ENCODE measurements at regions of chr20 and their contacts with region 1.

Region 1: GRCh38 chr20:354298-355064 is 7.6 kb downstream of the NRSN2 start:
- DNase-seq: peak; percentile 81 to 87 (median 84)
- ATAC-seq: peak; percentile 95
- H3K4me3 ChIP-seq: no peak overlapping the region
- H3K27ac ChIP-seq: peak overlapping the region; percentile 33; the same call in 1 of the 3 replicates
- H3K4me1 ChIP-seq: peaks cover 6 to 12% of the 10 kb centered on the region in 2 experiments; a peak in 4 of 5 replicates
- H3K27me3 ChIP-seq: no peaks in the 10 kb centered on the region
- CTCF ChIP-seq: peak; percentile 88 to 93 (median 92)
- EP300 ChIP-seq: 0 out of 2 replicates have a peak, but pooled peaks have one; percentile 19
- POLR2A ChIP-seq: no peak
- RAD21 ChIP-seq: peak; percentile 93 to 94

Region 2: DNA sequence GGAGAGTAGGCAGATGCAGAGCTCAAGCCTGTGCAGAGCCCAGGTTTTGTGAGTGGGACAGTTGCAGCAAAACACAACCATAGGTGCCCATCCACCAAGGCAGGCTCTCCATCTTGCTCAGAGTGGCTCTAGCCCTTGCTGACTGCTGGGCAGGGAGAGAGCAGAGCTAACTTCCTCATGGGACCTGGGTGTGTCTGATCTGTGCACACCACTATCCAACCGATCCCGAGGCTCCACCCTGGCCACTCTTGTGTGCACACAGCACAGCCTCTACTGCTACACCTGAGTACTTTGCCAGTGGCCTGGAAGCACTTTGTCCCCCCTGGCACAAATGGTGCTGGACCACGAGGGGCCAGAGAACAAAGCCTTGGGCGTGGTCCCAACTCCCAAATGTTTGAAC is 274.9 kb before region 1 on chr20:
- CTCF ChIA-PET with region 1: no interaction called
- POLR2A ChIA-PET with region 1: no interaction called
- in situ Hi-C with region 1: no loop called
- intact Hi-C with region 1: no loop called
- DNase-seq: no peak
- ATAC-seq: no peak
- H3K4me3 ChIP-seq: no peak overlapping the region
- H3K27ac ChIP-seq: no peak overlapping the region
- H3K4me1 ChIP-seq: no peaks in the 10 kb centered on the region; a peak in 1 of 5 replicates
- H3K27me3 ChIP-seq: no peaks in the 10 kb centered on the region
- CTCF ChIP-seq: no peak
- EP300 ChIP-seq: no peak
- POLR2A ChIP-seq: no peak
- RAD21 ChIP-seq: no peak

Region 3: DNA sequence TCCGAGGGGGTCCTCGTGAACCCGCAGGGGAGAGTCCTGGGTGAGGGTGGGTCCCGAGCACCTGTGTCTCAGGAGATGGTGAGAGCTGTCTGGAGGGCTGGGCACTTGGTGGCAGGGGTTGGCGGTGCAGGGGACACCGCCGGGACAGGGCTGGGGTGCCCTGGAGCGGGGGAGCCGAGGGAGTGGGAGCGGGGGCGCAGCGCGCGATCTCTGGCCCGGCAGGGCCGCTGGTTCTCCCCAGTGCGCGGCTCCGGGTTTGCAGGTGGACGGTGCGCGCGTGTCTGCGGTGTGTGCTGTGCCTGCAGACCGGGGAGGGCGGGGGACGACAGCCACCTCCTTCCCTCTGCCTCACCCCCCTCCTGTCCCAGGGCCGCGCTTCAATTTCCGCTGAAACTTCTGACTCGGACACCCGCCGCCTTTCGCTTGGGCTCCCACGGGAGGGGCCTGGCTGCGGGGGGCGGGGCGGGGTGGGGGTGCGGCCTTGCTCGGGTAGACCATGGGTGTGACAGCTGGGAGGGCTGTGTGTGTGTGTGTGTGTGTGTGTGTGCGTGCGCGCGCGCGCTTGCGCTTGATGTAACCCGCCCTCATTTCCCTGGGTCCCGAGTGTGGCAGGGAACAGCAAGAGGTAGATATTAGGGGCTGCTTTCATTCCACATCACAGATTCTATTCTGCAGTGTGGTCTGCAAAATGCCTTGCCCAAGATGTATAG is 27.3 kb after region 1 on chr20:
- CTCF ChIA-PET with region 1: no interaction called
- POLR2A ChIA-PET with region 1: interaction called, 4 read pairs
- in situ Hi-C with region 1: no loop called
- intact Hi-C with region 1: loop called (anchors 2 kb)
- DNase-seq: peak; percentile 71 to 88 (median 77)
- ATAC-seq: peak; percentile 75
- H3K4me3 ChIP-seq: peak overlapping the region; percentile 93
- H3K27ac ChIP-seq: peak overlapping the region; percentile 96
- H3K4me1 ChIP-seq: peaks cover 25 to 26% of the 10 kb centered on the region in 2 experiments; a peak in 4 of 5 replicates
- H3K27me3 ChIP-seq: no peaks in the 10 kb centered on the region
- CTCF ChIP-seq: no peak
- EP300 ChIP-seq: peak; percentile 27; the same call in 1 of the 2 replicates
- POLR2A ChIP-seq: peak; percentile 82
- RAD21 ChIP-seq: no peak

Region 4: DNA sequence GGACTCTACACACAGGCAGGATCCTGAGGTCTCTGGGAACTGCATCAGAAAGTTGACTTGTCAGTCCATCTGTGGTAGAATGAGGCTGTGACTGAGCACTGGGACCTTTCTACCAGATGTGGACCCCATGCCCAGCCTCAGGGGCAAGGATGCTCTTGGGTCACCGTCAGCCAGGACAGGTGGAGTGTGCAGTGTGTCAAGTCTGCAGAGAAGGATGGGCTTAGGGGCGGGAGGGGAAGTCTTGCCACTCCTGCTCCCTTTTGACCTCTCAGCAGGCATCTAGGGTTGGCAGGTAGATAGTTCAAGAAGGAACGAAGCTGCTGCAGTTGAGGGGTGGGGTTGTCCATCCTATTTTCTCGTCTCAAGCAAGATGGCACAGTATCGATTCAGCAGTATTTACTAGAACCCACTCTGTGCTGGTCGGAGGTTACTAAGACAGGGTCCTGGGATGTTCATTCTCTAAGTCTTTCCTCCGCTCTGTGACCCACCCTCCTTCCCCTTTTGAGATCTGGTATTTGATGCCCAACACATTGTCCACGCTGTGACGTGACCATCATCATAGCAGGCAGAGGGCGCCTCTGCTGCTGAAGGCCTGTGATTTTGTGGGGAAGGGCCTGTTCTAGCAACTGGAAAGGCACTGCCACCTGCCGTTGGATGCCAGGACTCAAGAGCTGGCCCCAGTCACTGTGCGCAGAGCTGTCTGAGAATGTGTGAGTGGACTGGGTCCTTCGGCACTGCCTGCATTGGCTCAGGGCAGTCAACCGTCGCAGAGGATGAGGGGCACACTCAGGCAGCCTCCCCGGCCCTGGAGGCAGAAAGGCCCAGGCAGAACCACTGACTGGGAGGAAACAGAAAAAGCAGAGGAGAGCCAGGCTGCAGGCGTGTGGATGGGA is 76.8 kb after region 1 on chr20:
- CTCF ChIA-PET with region 1: interaction called, 27 read pairs
- POLR2A ChIA-PET with region 1: interaction called, 3 read pairs
- in situ Hi-C with region 1: no loop called
- intact Hi-C with region 1: loop called (anchors 1 kb)
- DNase-seq: peak; percentile 29 to 71 (median 48)
- ATAC-seq: peak; percentile 73
- H3K4me3 ChIP-seq: no peak overlapping the region
- H3K27ac ChIP-seq: no peak overlapping the region; the same call in 2 of the 3 replicates
- H3K4me1 ChIP-seq: peaks cover 0 to 20% of the 10 kb centered on the region in 2 experiments; a peak in 2 of 5 replicates
- H3K27me3 ChIP-seq: no peaks in the 10 kb centered on the region
- CTCF ChIP-seq: peak; percentile 77 to 98 (median 92)
- EP300 ChIP-seq: no peak
- POLR2A ChIP-seq: no peak
- RAD21 ChIP-seq: peak; percentile 73 to 74

Region 5: DNA sequence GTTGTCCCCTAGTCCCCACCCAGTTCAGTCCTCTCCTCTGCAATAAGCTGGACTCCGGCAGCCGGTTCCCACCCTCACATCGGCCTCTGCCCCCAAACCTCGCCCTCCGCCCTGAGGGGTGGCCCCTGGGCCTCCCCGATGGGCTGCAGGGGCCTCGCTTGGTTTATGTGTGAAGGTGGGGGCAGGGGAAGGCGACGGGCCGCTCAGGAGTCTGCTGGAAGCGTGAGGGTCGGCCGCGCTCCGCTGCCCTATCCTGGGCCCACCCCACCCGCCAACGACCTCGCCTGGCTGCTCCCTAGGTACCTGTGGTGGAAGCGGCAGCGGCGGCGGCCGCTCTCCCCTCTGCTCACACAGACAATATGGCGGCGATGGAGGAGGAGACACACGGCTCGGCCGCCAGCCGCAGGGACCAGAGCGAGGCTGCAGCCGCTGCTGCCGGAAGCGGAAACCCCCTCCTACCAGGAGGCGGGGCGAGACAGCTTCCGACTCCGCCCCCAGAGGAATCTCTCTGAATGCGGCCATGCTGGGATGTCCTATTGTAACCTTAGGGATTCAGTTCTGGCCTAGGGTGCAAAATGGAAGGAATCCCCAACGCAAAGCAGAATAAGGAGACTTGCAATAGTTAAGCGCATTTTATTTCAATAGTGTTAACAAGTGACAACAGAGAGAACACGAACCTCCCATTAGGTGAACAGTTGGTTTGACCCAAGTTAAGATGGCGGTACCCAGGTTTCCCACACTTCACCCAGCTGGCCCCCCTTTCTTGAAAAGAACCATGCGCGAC is 189.1 kb after region 1 on chr20 and contains the start of gene CSNK2A1:
- CTCF ChIA-PET with region 1: no interaction called
- POLR2A ChIA-PET with region 1: no interaction called
- in situ Hi-C with region 1: no loop called
- intact Hi-C with region 1: loop called (anchors 10 kb)
- DNase-seq: peak; percentile 85 to 94 (median 88)
- ATAC-seq: peak; percentile 95
- H3K4me3 ChIP-seq: peak within 1 kb of the TSS; percentile 94
- H3K27ac ChIP-seq: peak within 1 kb of the TSS; percentile 96
- H3K4me1 ChIP-seq: peaks cover 0 to 53% of the 10 kb centered on the region in 2 experiments; a peak in 4 of 5 replicates
- H3K27me3 ChIP-seq: no peaks in the 10 kb centered on the region
- CTCF ChIP-seq: no peak
- EP300 ChIP-seq: no peak
- POLR2A ChIP-seq: peak; percentile 91
- RAD21 ChIP-seq: no peak
- polyA plus RNA-seq, gene CSNK2A1: 71.0 to 101 TPM

Region 6: GRCh38 chr20:645318-646106 is 291.0 kb after region 1 on chr20:
- CTCF ChIA-PET with region 1: no interaction called
- POLR2A ChIA-PET with region 1: no interaction called
- in situ Hi-C with region 1: no loop called
- intact Hi-C with region 1: loop called (anchors 10 kb)
- DNase-seq: peak; percentile 57 to 82 (median 70)
- ATAC-seq: peak; percentile 87
- H3K4me3 ChIP-seq: no peak overlapping the region
- H3K27ac ChIP-seq: peak overlapping the region; percentile 67; the same call in 2 of the 3 replicates
- H3K4me1 ChIP-seq: peaks cover 18 to 19% of the 10 kb centered on the region in 2 experiments; a peak in 4 of 5 replicates
- H3K27me3 ChIP-seq: no peaks in the 10 kb centered on the region
- CTCF ChIP-seq: peak; percentile 83 to 90 (median 87)
- EP300 ChIP-seq: no peak
- POLR2A ChIP-seq: 0 out of 2 replicates have a peak, but pooled peaks have one; percentile 37
- RAD21 ChIP-seq: peak; percentile 85 to 86